ENCODE measurements at regions of chr6 and their contacts with region 1.

Region 1: GRCh38 chr6:84663866-84664265 is 100.5 kb downstream of the TBX18 start:
- DNase-seq: no peak
- H3K4me3 ChIP-seq: no peak overlapping the region
- H3K27ac ChIP-seq: no peak overlapping the region
- H3K4me1 ChIP-seq: no peaks in the 10 kb centered on the region
- H3K27me3 ChIP-seq: peaks cover 1% of the 10 kb centered on the region
- CTCF ChIP-seq: no peak

Region 2: DNA sequence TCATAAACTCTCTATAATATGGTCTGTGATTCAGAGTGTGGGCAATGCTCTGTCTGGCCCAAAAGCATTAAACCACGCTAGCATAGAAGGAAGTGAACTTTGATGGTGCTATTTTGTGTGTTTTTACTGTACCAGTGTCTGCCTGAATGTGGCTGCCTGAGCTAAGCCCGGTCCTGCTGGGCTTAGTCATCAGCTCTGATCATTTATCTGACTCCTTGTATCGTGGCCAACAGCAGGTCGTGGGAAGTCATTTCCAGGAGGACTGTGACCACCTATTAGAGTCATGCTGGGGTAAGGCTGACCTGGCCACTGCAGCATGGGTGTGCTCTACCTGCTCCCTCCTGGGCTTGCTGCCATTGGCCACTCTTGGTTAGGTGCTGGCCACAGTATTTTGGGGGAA is 197.4 kb before region 1 on chr6:
- CTCF ChIA-PET with region 1: no interaction called
- dilution Hi-C with region 1: no loop called
- in situ Hi-C with region 1: no loop called
- intact Hi-C with region 1: no loop called
- DNase-seq: peak; percentile 48
- H3K4me3 ChIP-seq: no peak overlapping the region
- H3K27ac ChIP-seq: no peak overlapping the region
- H3K4me1 ChIP-seq: no peaks in the 10 kb centered on the region
- H3K27me3 ChIP-seq: peaks cover 3% of the 10 kb centered on the region
- CTCF ChIP-seq: no peak

Region 3: DNA sequence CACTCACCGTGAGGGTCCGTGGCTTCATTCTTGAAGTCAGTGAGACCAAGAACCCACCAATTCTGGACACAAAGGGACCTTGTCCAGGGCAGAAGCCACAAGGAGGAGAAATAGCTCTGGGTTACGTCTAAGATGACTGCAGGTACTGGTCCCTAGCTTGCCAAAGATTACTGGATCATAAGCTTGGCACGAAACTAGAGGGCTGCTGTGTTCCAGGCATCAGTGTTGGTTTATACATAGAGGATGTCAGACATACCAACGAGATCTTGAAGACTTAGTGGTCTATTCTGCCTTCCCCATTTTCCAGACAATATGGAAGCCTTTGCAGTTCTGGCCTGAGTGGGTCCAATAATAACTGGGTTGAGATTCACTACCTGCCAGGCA is 75.2 kb before region 1 on chr6:
- CTCF ChIA-PET with region 1: no interaction called
- dilution Hi-C with region 1: loop called (anchors 5 kb)
- in situ Hi-C with region 1: no loop called
- intact Hi-C with region 1: no loop called
- DNase-seq: no peak
- H3K4me3 ChIP-seq: no peak overlapping the region
- H3K27ac ChIP-seq: no peak overlapping the region
- H3K4me1 ChIP-seq: no peaks in the 10 kb centered on the region
- H3K27me3 ChIP-seq: peaks cover 1% of the 10 kb centered on the region
- CTCF ChIP-seq: no peak

Region 4: GRCh38 chr6:84738996-84739865 is 75.4 kb after region 1 on chr6:
- CTCF ChIA-PET with region 1: no interaction called
- dilution Hi-C with region 1: no loop called
- in situ Hi-C with region 1: no loop called
- intact Hi-C with region 1: no loop called
- DNase-seq: peak; percentile 88
- H3K4me3 ChIP-seq: peak overlapping the region in 1 of 3 experiments; percentile 16
- H3K27ac ChIP-seq: peak overlapping the region; percentile 85
- H3K4me1 ChIP-seq: peaks cover 25% of the 10 kb centered on the region
- H3K27me3 ChIP-seq: no peaks in the 10 kb centered on the region
- CTCF ChIP-seq: no peak

Region 5: DNA sequence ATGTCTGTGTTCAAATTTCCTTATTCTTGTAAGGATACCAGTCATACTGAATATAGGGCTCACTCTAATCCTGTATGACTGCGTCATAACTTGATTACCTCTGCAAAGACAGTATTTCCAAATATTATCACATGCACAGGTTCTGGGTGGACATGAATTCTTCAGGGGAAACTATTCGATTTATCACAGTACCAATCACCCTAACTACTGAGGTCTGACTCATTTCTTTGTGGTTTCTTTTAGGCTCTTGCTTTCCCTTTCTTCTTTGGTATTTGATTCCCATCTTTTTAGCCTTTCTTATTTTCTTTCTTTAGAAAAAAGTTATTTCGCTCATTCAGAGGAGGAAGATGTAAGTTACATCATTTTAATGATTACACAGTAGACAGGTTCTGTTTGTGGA is 140.9 kb after region 1 on chr6:
- CTCF ChIA-PET with region 1: no interaction called
- dilution Hi-C with region 1: no loop called
- in situ Hi-C with region 1: no loop called
- intact Hi-C with region 1: no loop called
- DNase-seq: peak; percentile 76
- H3K4me3 ChIP-seq: no peak overlapping the region
- H3K27ac ChIP-seq: no peak overlapping the region
- H3K4me1 ChIP-seq: peaks cover 12% of the 10 kb centered on the region
- H3K27me3 ChIP-seq: no peaks in the 10 kb centered on the region
- CTCF ChIP-seq: no peak

Measured in mammary epithelial cell (primary cell).